PC-9 (cell line): ENCODE measurements at regions of chr7 and their contacts with region 1.

Region 1: DNA sequence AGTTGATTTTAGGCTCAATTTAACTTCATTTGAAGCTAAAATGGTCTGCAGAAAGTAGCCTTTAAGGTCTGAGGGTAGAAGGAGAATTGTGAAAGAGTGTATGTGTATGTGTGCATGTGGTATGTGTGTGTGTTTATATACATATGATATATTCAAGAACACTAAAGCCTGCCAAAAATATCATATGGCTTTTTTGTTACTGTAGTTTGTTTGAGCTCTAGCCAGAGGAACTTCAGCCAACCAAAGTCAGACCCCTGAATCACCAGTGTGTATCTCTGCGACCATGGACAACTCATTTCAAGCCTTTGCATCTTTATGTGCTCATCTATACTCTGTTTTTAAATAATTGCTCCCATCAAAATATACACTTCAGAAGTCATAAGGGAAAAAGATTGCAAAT is 58.4 kb upstream of the HDAC9 start:
- DNase-seq: no peak
- H3K4me3 ChIP-seq: no peak overlapping the region
- H3K27ac ChIP-seq: no peak overlapping the region
- H3K4me1 ChIP-seq: no peaks in the 10 kb centered on the region
- H3K27me3 ChIP-seq: no peaks in the 10 kb centered on the region
- CTCF ChIP-seq: no peak

Region 2: GRCh38 chr7:18225067-18225466 is 212.0 kb before region 1 on chr7:
- CTCF ChIA-PET with region 1: no interaction called
- POLR2A ChIA-PET with region 1: no interaction called
- intact Hi-C with region 1: no loop called
- DNase-seq: no peak
- H3K4me3 ChIP-seq: no peak overlapping the region
- H3K27ac ChIP-seq: no peak overlapping the region
- H3K4me1 ChIP-seq: no peaks in the 10 kb centered on the region
- H3K27me3 ChIP-seq: no peaks in the 10 kb centered on the region
- CTCF ChIP-seq: no peak

Region 3: DNA sequence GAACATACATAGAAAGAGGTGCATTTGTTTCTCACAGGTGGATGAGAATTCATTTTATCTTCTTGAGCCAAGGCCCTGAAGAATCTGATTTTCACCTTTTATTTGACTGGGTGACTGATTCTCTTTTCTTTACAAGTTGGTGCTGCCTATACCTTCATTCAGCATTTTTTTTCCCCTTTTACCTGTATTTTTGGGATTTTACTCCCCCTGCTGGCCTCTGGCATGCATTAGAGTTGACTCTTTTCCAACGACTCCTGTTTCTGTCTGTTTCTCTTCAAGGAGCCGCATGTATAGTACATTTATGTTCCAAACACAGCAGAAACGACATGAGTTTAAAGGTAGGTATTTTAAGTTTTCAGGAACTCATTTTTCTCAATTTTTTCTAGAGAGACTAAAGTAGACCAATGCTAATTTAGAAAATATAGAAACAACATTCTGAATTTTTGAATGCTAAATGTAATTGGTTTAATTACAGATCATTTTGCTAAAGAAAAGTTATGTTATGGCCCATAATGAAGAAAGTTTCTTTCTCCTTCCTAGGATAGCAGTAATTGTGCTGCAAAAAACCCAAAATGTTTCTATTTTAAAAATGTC is 91.4 kb before region 1 on chr7:
- CTCF ChIA-PET with region 1: no interaction called
- POLR2A ChIA-PET with region 1: no interaction called
- intact Hi-C with region 1: no loop called
- DNase-seq: peak in 1 of 2 experiments; percentile 51
- H3K4me3 ChIP-seq: no peak overlapping the region
- H3K27ac ChIP-seq: no peak overlapping the region
- H3K4me1 ChIP-seq: no peaks in the 10 kb centered on the region
- H3K27me3 ChIP-seq: no peaks in the 10 kb centered on the region
- CTCF ChIP-seq: peak; percentile 98

Region 4: GRCh38 chr7:18370633-18371032 is 66.5 kb before region 1 on chr7:
- CTCF ChIA-PET with region 1: interaction called, 10 read pairs
- POLR2A ChIA-PET with region 1: no interaction called
- intact Hi-C with region 1: no loop called
- DNase-seq: no peak
- H3K4me3 ChIP-seq: no peak overlapping the region
- H3K27ac ChIP-seq: no peak overlapping the region
- H3K4me1 ChIP-seq: no peaks in the 10 kb centered on the region
- H3K27me3 ChIP-seq: no peaks in the 10 kb centered on the region
- CTCF ChIP-seq: no peak

Region 5: GRCh38 chr7:18393465-18394118 is 43.5 kb before region 1 on chr7:
- CTCF ChIA-PET with region 1: no interaction called
- POLR2A ChIA-PET with region 1: no interaction called
- intact Hi-C with region 1: loop called (anchors 5 kb)
- DNase-seq: no peak
- H3K4me3 ChIP-seq: no peak overlapping the region
- H3K27ac ChIP-seq: no peak overlapping the region
- H3K4me1 ChIP-seq: no peaks in the 10 kb centered on the region
- H3K27me3 ChIP-seq: no peaks in the 10 kb centered on the region
- CTCF ChIP-seq: no peak